Activated T-helper 2 cell treated with anti-CD3 and anti-CD28 coated beads, Interferon-gamma antibody, Interleukin-2, Interleukin-4, amounts not matched to agents 10 μg/mL and 5 μg/mL and 100 μg/mL, durations not matched to agents 14 hours and 24 hours and 36 hours (primary cell): ENCODE measurements at regions of chr11 and their contacts with region 1.

Region 1: DNA sequence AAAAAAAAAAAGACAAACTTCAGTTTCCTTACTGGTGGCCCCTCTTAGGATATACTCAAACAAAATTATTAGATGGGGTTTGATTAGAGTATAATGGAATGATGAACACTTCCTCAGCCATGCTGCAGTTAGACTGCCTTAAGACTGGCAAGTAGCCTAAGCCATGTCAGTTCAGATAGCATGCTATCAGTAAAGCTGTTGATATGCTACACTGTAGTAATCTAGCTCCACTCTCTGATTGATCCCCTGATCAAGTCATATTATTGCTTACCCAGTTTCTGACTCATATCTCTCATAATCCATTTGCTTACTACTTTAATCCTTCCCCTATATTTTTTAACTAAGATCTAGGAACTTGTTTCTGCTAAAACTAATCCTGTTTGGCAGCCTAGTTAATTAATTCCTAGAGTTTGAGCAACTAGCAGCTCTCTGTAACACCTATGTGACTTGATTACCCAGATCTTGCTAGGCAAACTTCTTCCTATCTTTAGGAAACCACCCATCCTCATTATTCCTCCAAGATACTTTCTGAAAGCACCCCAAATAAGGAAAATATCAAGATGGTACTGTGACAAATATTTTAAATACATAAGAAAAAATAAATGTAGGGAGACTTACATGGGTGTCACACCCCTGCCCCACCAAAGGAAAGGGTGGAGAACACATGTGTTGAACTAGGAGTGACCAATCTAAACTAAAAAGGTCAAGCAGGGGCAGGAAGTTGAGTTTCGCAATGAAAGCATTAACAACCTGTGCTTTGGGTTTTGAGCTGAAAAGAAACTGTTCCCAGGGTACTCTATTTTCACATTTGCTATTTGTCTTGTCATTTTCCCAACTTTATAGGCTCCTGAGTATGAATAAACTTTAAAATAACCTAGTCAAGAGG is 43.2 kb downstream of the PIK3C2A start:
- DNase-seq: no peak
- H3K4me3 Mint-ChIP-seq: no peak overlapping the region
- H3K27ac Mint-ChIP-seq: no peak overlapping the region
- H3K4me1 Mint-ChIP-seq: peaks cover 34% of the 10 kb centered on the region
- H3K27me3 Mint-ChIP-seq: no peaks in the 10 kb centered on the region

Region 2: DNA sequence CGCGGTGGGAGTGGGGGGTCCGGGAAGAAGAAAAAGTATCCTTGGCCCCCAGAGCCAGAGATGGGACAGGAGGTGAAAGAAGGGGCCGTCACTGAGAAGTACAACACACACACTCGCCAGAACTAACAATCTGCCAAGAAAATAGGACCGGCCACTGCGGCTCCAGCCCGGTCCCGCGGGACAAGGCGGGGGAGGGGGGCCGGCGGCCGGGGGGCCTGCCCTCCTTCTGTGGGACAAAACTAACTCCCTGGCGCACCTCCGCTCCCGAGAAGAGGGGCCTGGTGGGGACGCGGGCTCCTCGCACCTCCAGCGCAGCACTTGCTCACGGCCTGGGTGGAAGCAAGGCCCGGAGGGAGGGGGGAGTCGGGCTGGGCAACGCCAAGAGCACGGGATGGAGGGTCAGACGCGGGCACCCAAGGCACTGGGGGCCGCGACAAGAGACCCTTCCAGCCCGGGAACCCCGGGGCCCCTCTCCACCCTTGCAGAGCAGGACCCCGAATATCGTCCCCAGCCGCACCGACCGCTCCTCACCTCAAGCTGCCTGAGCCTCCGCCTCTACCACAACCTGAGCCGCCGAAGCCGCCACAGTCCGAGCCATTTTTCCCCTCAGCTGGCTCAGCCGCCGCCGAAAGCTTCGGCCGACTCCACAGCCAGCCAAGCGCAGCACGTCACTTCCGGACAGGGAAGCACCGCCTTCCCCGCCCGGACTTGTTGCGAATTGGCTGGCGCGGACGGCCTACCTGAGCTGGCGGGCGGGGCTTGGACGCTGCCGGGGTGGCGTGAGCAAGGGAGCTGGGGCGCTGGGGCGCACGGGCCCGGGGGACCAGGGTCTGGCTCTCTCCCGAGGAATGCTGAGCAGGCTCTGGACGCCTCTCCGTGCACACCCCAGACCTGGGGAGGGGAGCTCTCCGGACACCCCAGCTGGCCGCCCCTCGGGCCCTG is 43.0 kb after region 1 on chr11 and contains the start of gene PIK3C2A:
- intact Hi-C with region 1: loop called (anchors 5 kb)
- DNase-seq: peak; percentile 90
- H3K4me3 Mint-ChIP-seq: peak within 1 kb of the TSS; percentile 99
- H3K27ac Mint-ChIP-seq: peak within 1 kb of the TSS; percentile 95
- H3K4me1 Mint-ChIP-seq: peaks cover 32% of the 10 kb centered on the region
- H3K27me3 Mint-ChIP-seq: no peaks in the 10 kb centered on the region
- total RNA-seq, gene PIK3C2A: 29.3 and 32.5 TPM in 2 replicates